Transverse colon (tissue), 4 donors: ENCODE measurements at regions of chr17 and their contacts with region 1.

Region 1: DNA sequence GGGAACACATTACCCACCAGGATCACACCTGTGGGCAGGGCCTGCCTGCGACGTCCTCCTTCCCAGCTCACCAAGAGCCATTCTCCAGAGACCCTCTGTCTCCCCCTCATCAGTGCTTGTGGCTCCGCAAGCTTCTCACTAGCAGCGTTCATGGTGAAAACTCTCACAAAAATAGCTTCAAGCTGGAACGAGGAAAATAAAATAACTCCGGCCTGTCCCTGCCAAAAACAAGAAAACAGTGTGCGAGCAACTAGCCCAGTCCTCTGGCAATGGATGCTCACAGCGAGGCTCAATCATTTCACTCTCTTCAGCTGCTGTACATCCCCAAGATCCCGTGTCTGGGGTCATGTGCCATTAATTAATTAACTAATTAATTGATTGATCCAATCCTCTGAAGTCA is 18.0 kb downstream of the SPACA3 start:
- DNase-seq: no peak
- H3K4me3 ChIP-seq: no peak overlapping the region
- H3K27ac ChIP-seq: no peak overlapping the region
- H3K4me1 ChIP-seq: no peaks in the 10 kb centered on the region
- H3K27me3 ChIP-seq: no peaks in the 10 kb centered on the region
- CTCF ChIP-seq: no peak
- EP300 ChIP-seq: no peak
- POLR2A ChIP-seq: no peak

Region 2: DNA sequence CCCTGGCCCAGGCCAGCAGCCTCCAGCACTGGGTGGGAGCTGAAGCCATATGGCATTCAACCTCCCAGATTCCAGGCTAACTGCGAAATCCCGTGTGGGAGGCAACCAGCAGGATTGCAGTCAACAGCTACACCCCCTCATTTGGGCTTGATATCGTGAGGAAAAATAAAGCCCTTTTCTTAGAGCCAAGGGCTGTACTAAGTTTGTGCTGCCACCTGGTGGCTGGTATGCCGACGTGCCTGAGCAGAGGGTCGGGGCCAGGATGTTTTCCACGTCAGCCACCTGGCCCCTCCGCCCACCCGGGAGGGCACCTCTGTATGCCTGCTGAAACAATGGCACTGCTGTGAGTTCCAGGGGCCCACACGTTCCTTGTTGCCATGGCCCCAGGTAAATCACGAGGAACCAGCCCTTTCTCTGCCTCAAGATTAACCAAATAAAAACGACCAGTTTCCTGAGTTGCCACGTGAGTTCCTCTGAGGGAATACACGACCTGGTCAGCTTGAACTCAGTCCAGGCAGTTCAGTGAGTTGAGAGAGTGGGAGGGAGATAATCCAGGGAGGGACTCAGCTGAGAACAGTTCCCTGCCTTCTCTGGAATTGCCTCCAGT is 72.6 kb before region 1 on chr17:
- in situ Hi-C with region 1: loop called in 1 of 4 experiments (anchors 10 kb)
- intact Hi-C with region 1: no loop called
- DNase-seq: peak; percentile 78
- H3K4me3 ChIP-seq: no peak overlapping the region
- H3K27ac ChIP-seq: peak overlapping the region in 2 of 4 donors; percentile 28 to 37
- H3K4me1 ChIP-seq: peaks cover 0 to 8% (median 2%) of the 10 kb centered on the region in 4 donors
- H3K27me3 ChIP-seq: no peaks in the 10 kb centered on the region
- CTCF ChIP-seq: peak; percentile 83 to 91 (median 86)
- EP300 ChIP-seq: no peak
- POLR2A ChIP-seq: no peak